ENCODE measurements at regions of chr10 and their contacts with region 1.

Region 1: DNA sequence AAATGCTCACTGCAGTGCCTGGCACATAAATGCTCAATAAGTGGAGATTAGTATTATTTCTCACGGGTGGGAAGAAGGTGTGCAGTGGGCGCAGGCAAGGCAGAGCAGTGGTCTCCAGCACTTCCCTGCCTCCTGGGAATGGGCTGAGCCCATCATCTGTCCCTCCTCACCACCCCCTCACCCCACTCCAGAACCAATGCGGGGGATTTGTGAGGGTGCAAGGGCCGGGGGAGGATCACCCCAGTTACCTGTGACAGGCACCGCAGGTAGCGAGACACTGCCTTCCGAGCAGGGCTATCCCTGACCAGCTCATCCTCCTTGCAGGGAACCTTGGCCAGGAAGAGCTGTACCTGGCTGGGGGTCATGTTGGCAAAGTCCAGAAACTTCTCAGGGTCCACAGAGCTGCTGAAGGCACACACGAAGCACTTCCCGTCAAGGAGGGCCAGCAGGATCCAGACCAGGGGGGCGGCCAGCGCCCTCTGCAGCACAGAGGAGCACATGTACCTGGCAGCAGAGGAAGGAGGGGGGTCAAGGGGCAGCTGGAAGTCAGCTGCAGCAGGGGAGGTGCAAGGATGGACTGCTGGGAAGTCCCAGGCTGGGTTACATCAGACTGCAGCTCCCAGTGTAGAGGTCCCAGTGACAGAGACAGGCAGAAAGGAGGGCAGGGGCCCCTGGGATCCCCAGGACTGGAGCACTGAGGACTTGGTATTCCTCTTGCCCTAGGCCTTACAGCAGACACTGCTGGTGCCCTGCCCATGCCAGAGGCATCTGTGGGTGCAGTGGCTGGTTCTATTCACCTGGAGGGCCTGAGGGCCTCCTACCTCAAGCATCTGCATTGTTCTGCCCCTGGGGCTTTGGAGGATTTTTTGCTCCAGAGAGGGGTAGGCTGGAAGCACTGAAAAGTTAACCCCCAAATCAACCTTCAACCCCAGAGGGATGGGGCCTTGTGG is 2.7 kb downstream of the CALHM3 start:
- DNase-seq: no peak
- ATAC-seq: peak; percentile 80
- H3K4me3 ChIP-seq: no peak overlapping the region
- H3K27ac ChIP-seq: no peak overlapping the region
- H3K4me1 ChIP-seq: peaks cover 29% of the 10 kb centered on the region
- H3K27me3 ChIP-seq: no peaks in the 10 kb centered on the region
- CTCF ChIP-seq: peak; percentile 55 to 80 (median 67)
- EP300 ChIP-seq: no peak
- POLR2A ChIP-seq: no peak
- RAD21 ChIP-seq: peak; percentile 66

Region 2: DNA sequence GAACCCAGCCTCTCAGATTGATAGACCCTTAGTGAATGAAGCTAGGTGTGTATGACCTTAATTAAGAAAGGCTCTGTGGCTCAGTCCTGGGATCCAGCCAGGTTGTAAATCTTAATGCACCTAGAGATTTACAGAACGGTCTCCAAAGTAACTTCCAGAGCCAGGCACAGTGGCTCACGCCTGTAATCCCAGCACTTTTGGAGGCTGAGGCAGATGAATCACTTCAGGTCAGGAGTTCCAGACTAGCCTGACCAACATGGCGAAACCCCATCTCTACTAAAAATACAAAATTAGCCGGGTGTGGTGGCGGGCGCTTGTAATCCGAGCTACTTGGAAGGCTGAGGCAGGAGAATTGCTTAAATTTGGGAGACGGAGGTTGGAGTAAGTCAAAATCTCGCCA is 48.5 kb before region 1 on chr10:
- CTCF ChIA-PET with region 1: interaction called, 11 read pairs
- POLR2A ChIA-PET with region 1: no interaction called
- RAD21 ChIA-PET with region 1: interaction called, 5 read pairs
- SMC1A ChIA-PET with region 1: interaction called, 10 read pairs
- in situ Hi-C with region 1: no loop called
- intact Hi-C with region 1: no loop called
- DNase-seq: no peak
- ATAC-seq: no peak
- H3K4me3 ChIP-seq: no peak overlapping the region
- H3K27ac ChIP-seq: no peak overlapping the region
- H3K4me1 ChIP-seq: no peaks in the 10 kb centered on the region
- H3K27me3 ChIP-seq: no peaks in the 10 kb centered on the region
- CTCF ChIP-seq: no peak
- EP300 ChIP-seq: no peak
- POLR2A ChIP-seq: no peak
- RAD21 ChIP-seq: no peak

Region 3: DNA sequence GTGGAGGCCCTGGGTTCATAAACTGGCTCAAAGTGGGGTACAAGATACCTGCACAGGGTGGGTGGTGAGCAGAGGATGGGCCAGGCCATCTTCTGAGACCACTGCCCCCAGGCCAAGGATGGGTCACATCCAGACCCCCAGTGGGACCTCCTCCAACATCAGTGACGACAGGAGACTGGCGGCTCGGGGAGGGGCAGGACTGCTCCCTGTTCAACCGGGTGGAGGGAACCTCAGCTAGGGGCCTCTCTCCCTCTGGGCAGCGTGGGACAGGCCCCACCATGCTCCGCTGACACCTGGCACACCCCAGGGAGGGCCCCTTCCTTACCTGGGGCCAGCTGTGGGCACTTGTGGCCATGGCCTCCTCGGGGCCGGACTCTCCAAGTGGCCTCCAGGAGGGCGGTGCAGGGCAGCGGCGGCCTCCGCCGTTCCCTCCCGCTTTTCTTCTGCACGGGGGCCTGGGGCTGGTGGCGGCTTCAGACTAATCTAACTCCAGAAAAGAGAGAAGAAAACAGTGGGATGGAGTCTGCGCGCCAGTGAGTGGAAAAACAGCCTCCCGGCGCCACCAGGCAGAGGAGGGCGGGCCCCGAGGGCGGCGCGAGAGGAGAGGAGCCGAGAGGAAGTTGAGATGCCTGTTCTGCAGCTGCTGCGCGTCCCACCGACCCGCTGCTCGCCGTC is 24.4 kb before region 1 on chr10 and contains the start of gene CALHM2:
- CTCF ChIA-PET with region 1: interaction called, 163 read pairs
- POLR2A ChIA-PET with region 1: interaction called, 144 read pairs
- RAD21 ChIA-PET with region 1: interaction called, 73 read pairs
- SMC1A ChIA-PET with region 1: interaction called, 124 read pairs
- in situ Hi-C with region 1: no loop called
- intact Hi-C with region 1: loop called (anchors 1 kb)
- DNase-seq: no peak
- ATAC-seq: peak; percentile 84
- H3K4me3 ChIP-seq: peak within 1 kb of the TSS; percentile 98
- H3K27ac ChIP-seq: peak within 1 kb of the TSS; percentile 83
- H3K4me1 ChIP-seq: peaks cover 22% of the 10 kb centered on the region
- H3K27me3 ChIP-seq: no peaks in the 10 kb centered on the region
- CTCF ChIP-seq: 0 out of 6 replicates have a peak, but pooled peaks of 1 of the 3 experiments have one; percentile 11
- EP300 ChIP-seq: no peak
- POLR2A ChIP-seq: peak; percentile 72
- RAD21 ChIP-seq: 0 out of 2 replicates have a peak, but pooled peaks have one; percentile 2
- polyA plus RNA-seq, gene CALHM2: 0.60 to 1.9 TPM

Region 4: GRCh38 chr10:103458720-103459119 is 17.6 kb before region 1 on chr10 and contains the start of gene CALHM1:
- CTCF ChIA-PET with region 1: interaction called, 163 read pairs
- POLR2A ChIA-PET with region 1: interaction called, 144 read pairs
- RAD21 ChIA-PET with region 1: interaction called, 73 read pairs
- SMC1A ChIA-PET with region 1: interaction called, 124 read pairs
- in situ Hi-C with region 1: no loop called
- intact Hi-C with region 1: no loop called
- DNase-seq: no peak
- ATAC-seq: peak; percentile 93
- H3K4me3 ChIP-seq: no peak within 1 kb of the TSS
- H3K27ac ChIP-seq: no peak within 1 kb of the TSS
- H3K4me1 ChIP-seq: peaks cover 12% of the 10 kb centered on the region
- H3K27me3 ChIP-seq: no peaks in the 10 kb centered on the region
- CTCF ChIP-seq: no peak
- EP300 ChIP-seq: no peak
- POLR2A ChIP-seq: no peak
- RAD21 ChIP-seq: no peak
- polyA plus RNA-seq, gene CALHM1: 0.05 to 0.15 TPM

Region 5: DNA sequence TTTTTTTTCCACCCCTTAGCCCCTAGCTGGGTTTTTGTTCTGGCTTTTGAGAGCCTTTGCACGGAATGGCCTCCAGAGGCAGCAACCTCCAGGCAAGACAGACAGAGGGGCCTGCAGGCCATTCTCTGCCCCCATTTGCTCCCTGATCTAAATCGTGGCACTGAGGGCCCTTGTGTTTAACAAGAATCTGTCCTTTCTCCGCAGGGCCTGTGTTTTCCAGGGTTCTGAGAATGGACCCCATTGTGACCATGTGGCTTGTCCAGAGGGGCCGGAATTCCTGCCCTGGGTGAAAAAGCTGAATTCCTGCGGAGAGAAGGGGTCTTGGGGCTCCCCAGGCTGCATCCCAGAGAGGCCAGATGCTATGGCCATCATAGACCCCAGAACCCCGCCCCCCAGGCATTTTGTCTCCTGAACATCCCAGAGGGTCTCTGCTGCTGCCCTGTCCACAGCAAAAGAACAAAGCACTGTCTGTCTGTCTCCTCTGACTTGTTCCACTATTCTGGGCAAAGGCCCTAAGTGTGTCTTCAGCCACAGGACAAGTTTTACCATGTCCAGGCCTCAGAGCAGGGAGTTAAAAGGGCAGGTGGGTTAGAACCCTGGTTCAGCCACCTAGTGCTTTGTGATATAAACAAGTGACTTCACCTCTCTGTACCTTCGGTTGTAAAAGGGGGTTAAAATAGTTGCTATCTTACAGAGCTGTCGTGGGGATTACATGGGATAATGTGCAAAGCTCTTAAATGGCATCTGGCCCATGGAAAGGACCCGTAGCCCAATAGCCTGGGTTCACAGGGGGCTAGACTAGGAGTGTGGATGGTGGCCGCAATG is 223.5 kb after region 1 on chr10:
- CTCF ChIA-PET with region 1: no interaction called
- POLR2A ChIA-PET with region 1: no interaction called
- RAD21 ChIA-PET with region 1: no interaction called
- SMC1A ChIA-PET with region 1: no interaction called
- in situ Hi-C with region 1: no loop called
- intact Hi-C with region 1: no loop called
- DNase-seq: no peak
- ATAC-seq: no peak
- H3K4me3 ChIP-seq: no peak overlapping the region
- H3K27ac ChIP-seq: no peak overlapping the region
- H3K4me1 ChIP-seq: peaks cover 20% of the 10 kb centered on the region
- H3K27me3 ChIP-seq: no peaks in the 10 kb centered on the region
- CTCF ChIP-seq: no peak
- EP300 ChIP-seq: no peak
- POLR2A ChIP-seq: no peak
- RAD21 ChIP-seq: no peak